Mammary epithelial cell (primary cell): ENCODE measurements at regions of chr10 and their contacts with region 1.

Region 1: GRCh38 chr10:15605740-15606369 is 113.9 kb downstream of the ITGA8 start:
- DNase-seq: no peak
- H3K4me3 ChIP-seq: no peak overlapping the region
- H3K27ac ChIP-seq: no peak overlapping the region
- H3K4me1 ChIP-seq: no peaks in the 10 kb centered on the region
- H3K27me3 ChIP-seq: no peaks in the 10 kb centered on the region
- CTCF ChIP-seq: no peak

Region 2: GRCh38 chr10:15550950-15551349 is 54.9 kb before region 1 on chr10:
- CTCF ChIA-PET with region 1: no interaction called
- dilution Hi-C with region 1: loop called (anchors 5 kb)
- in situ Hi-C with region 1: no loop called
- intact Hi-C with region 1: no loop called
- DNase-seq: no peak
- H3K4me3 ChIP-seq: no peak overlapping the region
- H3K27ac ChIP-seq: no peak overlapping the region
- H3K4me1 ChIP-seq: no peaks in the 10 kb centered on the region
- H3K27me3 ChIP-seq: no peaks in the 10 kb centered on the region
- CTCF ChIP-seq: no peak

Region 3: GRCh38 chr10:15684768-15685167 is 78.9 kb after region 1 on chr10:
- CTCF ChIA-PET with region 1: no interaction called
- dilution Hi-C with region 1: loop called (anchors 5 kb)
- in situ Hi-C with region 1: no loop called
- intact Hi-C with region 1: no loop called
- DNase-seq: no peak
- H3K4me3 ChIP-seq: no peak overlapping the region
- H3K27ac ChIP-seq: no peak overlapping the region
- H3K4me1 ChIP-seq: no peaks in the 10 kb centered on the region
- H3K27me3 ChIP-seq: no peaks in the 10 kb centered on the region
- CTCF ChIP-seq: no peak